K562 (cell line): ENCODE measurements at regions of chr15 and their contacts with region 1.

Region 1: GRCh38 chr15:68875377-68876116 is 54.8 kb upstream of the SPESP1 start:
- DNase-seq: peak; percentile 73 to 88 (median 76)
- ATAC-seq: peak; percentile 93
- H3K4me3 ChIP-seq: no peak overlapping the region
- H3K27ac ChIP-seq: no peak overlapping the region
- H3K4me1 ChIP-seq: no peaks in the 10 kb centered on the region
- H3K27me3 ChIP-seq: peaks cover 16 to 21% of the 10 kb centered on the region in 2 experiments; a peak in 4 of 5 replicates
- CTCF ChIP-seq: peak; percentile 84 to 90 (median 89)
- EP300 ChIP-seq: no peak
- POLR2A ChIP-seq: no peak
- RAD21 ChIP-seq: peak; percentile 88 to 96

Region 2: DNA sequence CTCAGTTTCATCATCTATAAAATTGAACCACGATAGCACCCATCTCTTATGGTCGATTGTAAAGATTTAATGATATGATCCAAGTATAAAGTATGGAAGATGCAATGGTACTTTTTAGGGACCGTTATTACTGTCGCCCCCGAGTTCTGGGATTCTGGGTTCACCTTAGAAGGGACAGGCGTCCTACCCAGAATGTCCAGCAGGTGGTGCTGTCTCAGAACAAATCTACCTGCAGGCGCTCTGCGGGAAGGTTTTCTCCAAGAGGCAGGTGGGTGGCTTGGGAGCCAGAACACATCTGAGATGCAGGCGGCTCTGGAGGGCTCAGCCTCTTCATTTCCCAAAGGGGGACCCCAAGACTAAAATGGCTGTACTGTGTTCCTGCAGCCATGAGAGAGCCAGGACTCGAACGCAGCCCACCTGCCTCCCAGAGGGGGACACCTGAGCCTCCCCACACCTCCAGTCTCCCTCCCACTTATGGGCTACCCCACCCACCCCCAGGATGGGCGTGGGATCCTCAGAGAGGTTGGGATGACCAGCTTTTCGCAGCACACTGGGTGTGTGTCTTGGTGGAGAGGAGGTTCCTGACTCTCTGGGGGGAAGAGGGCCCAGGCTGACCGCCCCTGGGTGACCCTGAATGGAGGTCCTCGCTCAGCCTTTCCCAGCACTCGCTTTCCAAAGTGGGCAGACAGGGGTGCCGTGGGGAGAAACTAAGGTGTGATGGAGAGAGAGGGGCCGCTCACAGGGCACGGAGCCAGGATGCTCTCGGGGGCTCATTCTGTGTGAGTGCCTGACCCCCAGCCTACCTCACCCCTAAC is 324.9 kb before region 1 on chr15:
- CTCF ChIA-PET with region 1: interaction called, 13 read pairs
- POLR2A ChIA-PET with region 1: interaction called, 4 read pairs
- in situ Hi-C with region 1: loop called (anchors 5 kb)
- intact Hi-C with region 1: loop called (anchors 2 kb)
- DNase-seq: peak; percentile 60 to 72 (median 71)
- ATAC-seq: peak; percentile 87
- H3K4me3 ChIP-seq: no peak overlapping the region
- H3K27ac ChIP-seq: no peak overlapping the region
- H3K4me1 ChIP-seq: no peaks in the 10 kb centered on the region; a peak in 1 of 5 replicates
- H3K27me3 ChIP-seq: peaks cover 4 to 5% of the 10 kb centered on the region in 2 experiments; a peak in 1 of 5 replicates
- CTCF ChIP-seq: peak; percentile 83 to 87 (median 87)
- EP300 ChIP-seq: no peak
- POLR2A ChIP-seq: no peak
- RAD21 ChIP-seq: peak; percentile 68 to 79

Region 3: DNA sequence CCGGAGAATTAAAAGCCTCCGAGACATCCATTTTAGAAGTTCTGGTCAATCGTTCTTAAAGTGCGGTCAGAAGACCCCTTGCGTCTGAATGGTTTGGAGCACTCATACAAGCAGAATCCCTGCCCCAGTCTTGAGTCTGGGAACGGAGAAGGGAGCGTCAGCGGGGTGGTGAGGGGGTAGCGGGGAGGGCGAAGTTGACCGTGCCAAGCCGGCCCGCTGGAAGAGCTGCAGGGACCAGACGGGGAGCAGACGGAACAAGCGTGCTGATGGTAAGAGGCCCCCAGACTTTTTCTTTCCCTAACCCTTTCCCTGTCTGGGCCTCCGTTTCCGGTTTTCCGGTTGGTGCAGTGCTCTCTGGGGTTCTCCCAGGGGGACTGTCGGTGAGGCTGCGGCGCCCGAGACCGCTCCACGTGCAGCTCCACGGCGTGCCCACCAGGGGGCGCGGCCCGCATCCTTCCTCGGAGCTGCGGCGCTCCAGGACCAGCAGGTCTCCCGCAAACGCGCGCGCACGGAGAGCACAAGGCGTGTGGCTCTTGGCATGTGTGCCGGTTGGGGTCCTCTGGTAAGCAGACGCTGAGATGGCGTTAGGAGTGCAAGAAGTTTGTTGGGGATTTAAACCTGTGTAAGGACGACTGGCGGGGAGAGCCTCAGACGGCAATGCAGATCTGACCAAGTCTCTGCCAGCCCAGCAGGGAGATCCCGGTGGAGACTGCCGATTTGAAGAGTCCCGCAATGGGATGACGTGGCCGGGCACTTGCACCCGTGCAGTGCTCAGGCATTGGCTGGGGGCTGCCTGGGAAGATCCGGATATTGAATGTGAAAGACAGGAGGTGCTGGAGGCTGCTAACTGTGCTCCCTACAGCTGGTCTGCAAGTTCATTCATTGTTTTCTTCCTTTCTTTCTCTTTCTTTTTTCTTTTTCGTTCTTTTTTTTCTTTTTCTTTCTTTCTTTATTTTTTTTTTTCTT is 315.9 kb before region 1 on chr15:
- CTCF ChIA-PET with region 1: interaction called, 5 read pairs
- POLR2A ChIA-PET with region 1: no interaction called
- in situ Hi-C with region 1: loop called (anchors 5 kb)
- intact Hi-C with region 1: loop called (anchors 2 kb)
- DNase-seq: peak; percentile 66 to 89 (median 82)
- ATAC-seq: peak; percentile 98
- H3K4me3 ChIP-seq: no peak overlapping the region
- H3K27ac ChIP-seq: no peak overlapping the region
- H3K4me1 ChIP-seq: peaks cover 0 to 7% of the 10 kb centered on the region in 2 experiments; a peak in 2 of 5 replicates
- H3K27me3 ChIP-seq: peaks cover 2 to 45% of the 10 kb centered on the region in 2 experiments; a peak in 3 of 5 replicates
- CTCF ChIP-seq: peak; percentile 78 to 90 (median 86)
- EP300 ChIP-seq: no peak
- POLR2A ChIP-seq: no peak
- RAD21 ChIP-seq: peak; percentile 70 to 85

Region 4: DNA sequence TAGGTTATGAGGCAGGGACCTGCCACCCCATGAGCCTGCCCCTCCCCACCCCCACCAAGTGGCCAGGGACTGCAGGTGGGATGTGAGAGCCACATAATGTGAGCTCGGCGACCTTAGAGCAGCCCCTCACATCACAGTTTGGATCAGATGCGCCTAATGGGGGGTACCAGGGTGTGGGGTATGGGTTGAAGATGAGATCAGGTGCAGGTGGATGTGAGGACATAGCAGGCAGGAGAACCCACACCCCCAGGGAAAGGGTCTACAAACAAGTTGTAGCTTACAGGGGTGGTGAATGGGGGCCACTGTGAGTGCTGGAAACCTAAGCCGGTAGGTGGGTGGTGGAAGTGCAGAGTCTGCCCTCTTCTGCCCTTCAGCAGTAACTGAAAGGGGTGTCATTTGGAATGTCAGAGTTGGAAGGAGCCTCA is 202.8 kb before region 1 on chr15:
- CTCF ChIA-PET with region 1: interaction called, 3 read pairs
- POLR2A ChIA-PET with region 1: no interaction called
- in situ Hi-C with region 1: no loop called
- intact Hi-C with region 1: loop called (anchors 5 kb)
- DNase-seq: no peak
- ATAC-seq: peak; percentile 27; the same call in 1 of the 3 replicates
- H3K4me3 ChIP-seq: no peak overlapping the region
- H3K27ac ChIP-seq: no peak overlapping the region
- H3K4me1 ChIP-seq: no peaks in the 10 kb centered on the region
- H3K27me3 ChIP-seq: peaks cover 3 to 27% of the 10 kb centered on the region in 2 experiments; a peak in 3 of 5 replicates
- CTCF ChIP-seq: peak in 1 of 3 experiments; percentile 14; a peak in 1 of 6 replicates
- EP300 ChIP-seq: no peak
- POLR2A ChIP-seq: no peak
- RAD21 ChIP-seq: peak in 1 of 2 experiments; percentile 19; a peak in 2 of 4 replicates

Region 5: DNA sequence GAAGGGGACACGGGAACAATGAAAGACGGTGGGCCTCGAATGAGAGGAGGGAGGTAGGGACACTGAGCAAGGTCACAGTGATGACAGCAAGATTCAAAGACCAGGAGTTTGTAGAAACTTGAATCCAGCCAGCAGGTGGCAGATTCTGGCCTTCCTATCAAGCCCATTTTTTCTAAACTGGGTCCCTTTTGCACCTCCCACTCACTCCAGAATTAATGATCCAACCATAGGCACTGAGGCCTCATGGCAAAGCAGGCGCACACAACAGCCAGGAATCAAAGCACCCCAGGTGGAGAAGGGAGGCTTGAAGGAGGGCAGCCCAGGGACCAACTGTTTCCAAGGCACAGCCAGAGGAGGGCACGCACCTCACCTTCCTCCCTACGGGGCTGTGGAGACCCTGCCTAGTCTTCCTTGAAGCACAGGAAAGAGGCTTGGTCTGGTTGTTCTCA is 145.1 kb before region 1 on chr15:
- CTCF ChIA-PET with region 1: interaction called, 23 read pairs
- POLR2A ChIA-PET with region 1: interaction called, 3 read pairs
- in situ Hi-C with region 1: loop called (anchors 5 kb)
- intact Hi-C with region 1: loop called (anchors 1 kb)
- DNase-seq: peak in 3 of 4 experiments; percentile 23 to 52 (median 26)
- ATAC-seq: peak; percentile 79
- H3K4me3 ChIP-seq: no peak overlapping the region
- H3K27ac ChIP-seq: no peak overlapping the region
- H3K4me1 ChIP-seq: peaks cover 5 to 7% of the 10 kb centered on the region in 2 experiments; a peak in 4 of 5 replicates
- H3K27me3 ChIP-seq: peaks cover 28 to 62% of the 10 kb centered on the region in 2 experiments; a peak in 4 of 5 replicates
- CTCF ChIP-seq: peak; percentile 52 to 63 (median 53); a peak in 5 of 6 replicates
- EP300 ChIP-seq: no peak
- POLR2A ChIP-seq: no peak
- RAD21 ChIP-seq: peak; percentile 62 to 81

Region 6: DNA sequence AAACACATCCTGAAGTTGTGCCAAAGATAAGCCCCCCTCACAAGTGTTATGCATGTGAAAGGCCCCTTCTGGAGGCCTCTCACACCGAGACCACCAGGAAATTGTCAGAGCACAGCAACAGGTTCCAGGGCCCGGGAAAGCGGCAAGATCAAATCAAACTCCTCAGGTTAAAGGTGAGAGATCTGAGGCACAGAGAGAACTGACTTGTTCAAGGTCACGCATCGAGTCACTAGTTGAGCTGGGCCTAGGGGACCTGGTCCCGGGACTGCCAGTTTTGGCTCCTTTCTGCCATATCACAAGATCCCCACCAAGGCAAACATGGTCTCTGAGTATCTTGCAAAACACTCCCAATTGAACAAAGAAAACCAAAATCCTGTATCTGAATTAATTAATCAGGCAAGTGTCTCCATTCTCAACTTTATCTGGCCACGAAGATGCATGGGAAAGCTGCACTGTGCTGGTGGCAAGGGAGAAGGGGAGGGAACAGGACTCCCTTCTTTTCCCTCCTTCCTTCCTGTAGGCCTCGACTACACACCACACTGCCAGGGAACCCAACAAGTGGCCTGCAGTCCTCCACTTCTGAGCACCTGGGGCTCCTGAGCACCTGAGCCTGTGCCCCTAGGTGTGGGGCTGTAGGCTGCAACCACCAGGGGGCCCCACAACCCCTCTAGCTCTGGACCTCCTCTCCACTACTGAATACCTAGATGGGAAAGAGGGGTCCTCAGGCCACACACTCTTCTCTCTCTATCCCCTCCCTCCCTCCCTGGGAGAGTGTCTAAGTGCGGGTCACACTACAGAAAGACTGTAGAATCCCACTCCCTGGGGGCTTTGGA is 92.1 kb before region 1 on chr15:
- CTCF ChIA-PET with region 1: interaction called, 11 read pairs
- POLR2A ChIA-PET with region 1: no interaction called
- in situ Hi-C with region 1: loop called (anchors 5 kb)
- intact Hi-C with region 1: loop called (anchors 2 kb)
- DNase-seq: peak; percentile 57 to 59 (median 58)
- ATAC-seq: peak; percentile 96
- H3K4me3 ChIP-seq: no peak overlapping the region
- H3K27ac ChIP-seq: no peak overlapping the region
- H3K4me1 ChIP-seq: peaks cover 0 to 3% of the 10 kb centered on the region in 2 experiments; a peak in 1 of 5 replicates
- H3K27me3 ChIP-seq: no peaks in the 10 kb centered on the region
- CTCF ChIP-seq: peak; percentile 63 to 74 (median 65)
- EP300 ChIP-seq: no peak
- POLR2A ChIP-seq: no peak
- RAD21 ChIP-seq: peak; percentile 34 to 69; a peak in 3 of 4 replicates

Region 7: DNA sequence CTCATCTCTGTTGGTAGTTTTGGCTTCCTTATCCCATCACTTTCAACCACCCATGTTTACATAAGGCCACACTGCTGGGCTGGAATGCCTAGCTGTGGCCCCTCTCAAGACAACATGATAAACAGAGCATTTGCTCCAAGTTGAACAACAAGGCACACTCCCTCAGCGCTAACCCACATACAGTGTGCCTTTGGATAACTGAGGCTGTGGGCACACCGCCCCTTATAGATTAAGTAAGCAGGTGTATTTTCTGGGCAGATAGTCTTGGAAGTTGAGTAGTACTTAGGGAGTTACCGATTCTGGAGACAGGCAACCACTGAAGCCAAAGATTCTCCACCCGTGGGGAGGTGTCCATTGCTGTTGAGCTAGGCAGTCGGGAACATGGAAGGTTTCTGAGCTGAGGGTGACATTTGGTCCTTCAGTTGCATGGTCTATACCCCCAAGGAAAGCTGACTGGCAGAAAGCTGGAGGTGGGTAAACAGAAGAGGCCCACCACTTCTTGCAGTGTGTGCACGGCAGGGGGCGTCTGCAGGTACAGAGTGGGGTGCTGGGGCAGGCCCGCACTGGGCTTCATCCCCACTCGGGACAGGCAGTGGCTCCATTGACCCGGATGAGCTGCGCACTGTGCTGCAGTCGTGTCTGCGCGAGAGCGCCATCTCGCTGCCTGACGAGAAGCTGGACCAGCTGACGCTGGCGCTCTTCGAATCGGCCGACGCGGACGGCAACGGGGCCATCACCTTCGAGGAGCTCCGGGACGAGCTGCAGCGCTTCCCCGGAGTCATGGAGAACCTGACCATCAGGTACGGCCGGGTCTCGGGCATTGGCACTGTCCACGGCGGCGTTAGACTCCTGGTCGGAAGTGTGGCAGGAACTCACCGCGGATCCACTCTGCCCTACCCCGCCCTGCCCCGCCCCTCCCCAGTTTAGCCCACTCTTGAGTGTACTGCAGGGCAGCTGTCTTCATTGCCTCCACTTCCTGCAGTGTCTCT is 155.8 kb after region 1 on chr15:
- CTCF ChIA-PET with region 1: no interaction called
- POLR2A ChIA-PET with region 1: interaction called, 3 read pairs
- in situ Hi-C with region 1: no loop called
- intact Hi-C with region 1: loop called (anchors 2 kb)
- DNase-seq: peak; percentile 48 to 76 (median 62)
- ATAC-seq: peak; percentile 98
- H3K4me3 ChIP-seq: 0 out of 2 replicates have a peak overlapping the region, but pooled peaks have one; percentile 19
- H3K27ac ChIP-seq: no peak overlapping the region
- H3K4me1 ChIP-seq: peaks cover 0 to 13% of the 10 kb centered on the region in 2 experiments; a peak in 1 of 5 replicates
- H3K27me3 ChIP-seq: peaks cover 2 to 45% of the 10 kb centered on the region in 2 experiments; a peak in 2 of 5 replicates
- CTCF ChIP-seq: peak; percentile 79 to 84 (median 81)
- EP300 ChIP-seq: no peak
- POLR2A ChIP-seq: no peak
- RAD21 ChIP-seq: peak; percentile 58 to 89